ENCODE measurements at regions of chr2 and their contacts with region 1.

Region 1: DNA sequence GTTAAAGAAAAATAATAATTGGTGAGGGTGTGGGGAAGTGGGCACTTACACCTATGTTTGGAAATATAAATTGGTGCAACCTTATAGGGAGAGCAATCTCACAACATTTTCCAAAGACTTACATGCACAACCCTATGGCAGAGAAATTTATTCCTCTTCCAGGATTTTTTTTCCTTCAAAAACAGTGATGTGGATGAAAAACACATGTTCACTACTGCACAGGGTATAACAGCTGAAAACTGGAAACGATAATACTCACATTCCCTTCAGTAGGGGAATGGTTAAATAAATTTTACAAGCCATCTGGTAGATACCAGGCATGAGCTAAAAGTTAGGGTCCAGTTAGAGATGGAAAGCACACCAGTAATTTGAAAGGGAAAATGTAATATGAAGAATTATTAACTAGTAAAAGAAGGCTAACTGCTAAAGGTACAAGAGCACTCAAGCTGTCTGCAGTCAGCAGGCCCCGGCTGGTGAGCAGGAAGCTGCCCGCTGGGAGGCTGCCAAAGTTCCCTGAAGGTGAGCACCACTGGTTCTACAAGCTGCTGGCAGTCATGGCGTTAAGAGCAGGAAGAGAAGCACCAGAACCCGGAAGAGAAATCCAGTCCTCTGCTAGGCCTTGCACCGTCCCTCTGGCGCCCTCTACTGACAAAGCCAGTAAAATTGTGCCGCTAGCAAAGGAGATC is 28.4 kb upstream of the CASP8 start:
- DNase-seq: peak; percentile 98
- H3K4me3 Mint-ChIP-seq: peak overlapping the region; percentile 71
- H3K27ac Mint-ChIP-seq: peak overlapping the region; percentile 84
- H3K4me1 Mint-ChIP-seq: peaks cover 51% of the 10 kb centered on the region
- H3K27me3 Mint-ChIP-seq: no peaks in the 10 kb centered on the region

Region 2: DNA sequence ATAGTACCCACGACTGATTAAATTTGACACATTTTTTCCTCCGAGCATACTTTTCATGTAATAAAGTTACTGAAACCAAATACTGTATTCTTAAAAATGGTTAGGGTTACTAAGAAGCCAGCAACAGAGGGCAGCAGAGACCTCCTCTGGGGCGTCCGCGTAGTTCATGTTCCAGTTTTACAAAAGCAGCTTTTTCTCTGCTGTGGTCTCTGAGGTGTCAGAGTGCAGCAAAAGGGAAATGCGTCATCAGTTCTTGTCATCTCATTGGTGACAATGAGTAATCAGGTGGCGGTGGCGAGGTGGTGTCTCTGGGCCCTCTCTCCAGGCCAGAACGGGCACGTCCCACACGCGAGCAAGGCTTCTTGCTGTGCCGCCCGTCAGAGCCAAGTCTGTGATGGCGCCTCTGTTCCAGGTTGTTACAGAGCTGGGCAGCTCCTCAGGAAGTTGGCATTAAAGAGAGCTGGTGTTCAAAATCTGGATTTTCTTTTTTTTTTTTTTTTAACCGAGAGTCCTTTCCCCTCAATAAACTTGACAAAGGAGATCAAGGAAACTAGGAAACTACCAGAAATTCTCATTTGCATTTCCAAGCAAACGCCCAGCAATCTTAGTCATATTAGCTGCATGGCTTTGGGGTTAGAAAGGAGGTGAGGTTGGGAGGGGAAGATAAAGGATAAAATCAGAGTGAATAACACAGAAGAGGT is 518.8 kb before region 1 on chr2:
- CTCF ChIA-PET with region 1: interaction called, 3 read pairs
- intact Hi-C with region 1: loop called (anchors 1 kb)
- DNase-seq: peak; percentile 96
- H3K4me3 Mint-ChIP-seq: peak overlapping the region; percentile 77
- H3K27ac Mint-ChIP-seq: peak overlapping the region; percentile 100
- H3K4me1 Mint-ChIP-seq: peaks cover 32% of the 10 kb centered on the region
- H3K27me3 Mint-ChIP-seq: no peaks in the 10 kb centered on the region

Region 3: DNA sequence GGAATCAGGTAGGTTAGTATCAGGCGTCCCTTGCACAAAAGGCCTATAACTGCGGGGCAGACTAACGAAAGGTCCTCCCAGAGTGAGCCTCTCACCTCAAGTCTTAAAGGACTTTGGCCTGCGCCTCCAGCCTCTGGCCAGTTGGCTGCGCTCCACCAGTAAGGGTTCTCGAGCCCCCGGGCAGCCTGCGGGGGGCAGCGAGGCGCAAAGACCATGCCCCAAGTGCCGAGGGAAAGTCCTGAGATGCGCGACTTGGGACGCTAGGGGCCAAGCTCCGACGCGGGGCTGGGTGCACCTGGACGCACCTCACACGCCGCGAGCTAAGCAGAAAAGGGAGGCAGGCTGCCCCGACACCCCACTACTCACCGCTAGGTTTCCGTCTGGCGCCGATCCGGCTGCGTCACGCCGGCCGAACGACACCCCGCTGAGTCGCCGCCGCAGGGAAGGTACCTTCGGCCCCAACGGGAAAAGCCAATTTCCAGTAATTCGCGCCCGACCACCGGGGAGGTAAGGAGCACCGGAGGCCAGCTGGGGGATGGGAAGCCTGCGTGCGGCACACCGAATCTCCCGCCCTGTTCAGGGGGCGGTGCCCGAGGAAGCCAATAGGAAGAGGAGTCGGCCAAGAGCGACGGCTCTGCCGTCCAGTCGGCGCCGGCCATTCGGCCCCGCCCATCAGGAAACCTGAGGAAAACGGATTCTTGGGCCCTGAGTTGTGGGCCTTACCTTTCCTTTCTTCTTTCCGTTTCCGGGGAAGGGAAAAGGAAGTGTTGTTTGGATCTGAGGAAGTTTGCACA is 268.6 kb before region 1 on chr2 and contains the start of gene ORC2:
- CTCF ChIA-PET with region 1: interaction called, 4 read pairs
- intact Hi-C with region 1: loop called (anchors 1 kb)
- DNase-seq: peak; percentile 94
- H3K4me3 Mint-ChIP-seq: peak within 1 kb of the TSS; percentile 88
- H3K27ac Mint-ChIP-seq: peak within 1 kb of the TSS; percentile 94
- H3K4me1 Mint-ChIP-seq: peaks cover 56% of the 10 kb centered on the region
- H3K27me3 Mint-ChIP-seq: no peaks in the 10 kb centered on the region
- total RNA-seq, gene ORC2: 53.7 to 56.8 TPM

Region 4: GRCh38 chr2:201194097-201194496 is 37.8 kb before region 1 on chr2:
- CTCF ChIA-PET with region 1: interaction called, 60 read pairs
- intact Hi-C with region 1: loop called (anchors 1 kb)
- DNase-seq: no peak
- H3K4me3 Mint-ChIP-seq: no peak overlapping the region
- H3K27ac Mint-ChIP-seq: peak overlapping the region; percentile 50
- H3K4me1 Mint-ChIP-seq: peaks cover 66% of the 10 kb centered on the region
- H3K27me3 Mint-ChIP-seq: no peaks in the 10 kb centered on the region

Region 5: DNA sequence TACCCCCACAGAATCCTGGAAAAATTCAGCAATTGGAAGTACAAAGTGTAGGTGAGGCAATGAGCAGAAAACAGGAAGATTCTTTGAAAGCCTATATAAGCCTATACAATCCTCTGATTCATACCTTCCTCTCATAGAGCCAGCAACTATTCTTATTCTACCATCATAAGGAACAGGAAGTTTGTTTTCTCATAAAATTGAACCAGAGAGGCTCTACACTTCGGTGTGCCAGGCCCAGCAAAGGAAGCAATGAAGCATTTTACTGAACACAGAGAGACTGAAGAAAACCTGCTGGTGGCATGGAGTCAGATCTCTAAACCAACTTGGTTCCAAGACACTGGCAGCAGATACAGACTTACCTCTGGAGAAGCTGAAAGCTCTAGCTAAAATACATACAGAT is 47.2 kb after region 1 on chr2:
- CTCF ChIA-PET with region 1: interaction called, 5 read pairs
- intact Hi-C with region 1: loop called (anchors 1 kb)
- DNase-seq: peak; percentile 37
- H3K4me3 Mint-ChIP-seq: no peak overlapping the region
- H3K27ac Mint-ChIP-seq: peak overlapping the region; percentile 73
- H3K4me1 Mint-ChIP-seq: peaks cover 18% of the 10 kb centered on the region
- H3K27me3 Mint-ChIP-seq: no peaks in the 10 kb centered on the region

Region 6: GRCh38 chr2:201378496-201379397 is 146.8 kb after region 1 on chr2:
- CTCF ChIA-PET with region 1: no interaction called
- intact Hi-C with region 1: no loop called
- DNase-seq: no peak
- H3K4me3 Mint-ChIP-seq: no peak overlapping the region
- H3K27ac Mint-ChIP-seq: no peak overlapping the region
- H3K4me1 Mint-ChIP-seq: no peaks in the 10 kb centered on the region
- H3K27me3 Mint-ChIP-seq: no peaks in the 10 kb centered on the region

Region 7: GRCh38 chr2:201780674-201781581 is 549.0 kb after region 1 on chr2 and contains the start of gene ALS2:
- CTCF ChIA-PET with region 1: no interaction called
- intact Hi-C with region 1: loop called (anchors 2 kb)
- DNase-seq: peak; percentile 96
- H3K4me3 Mint-ChIP-seq: peak within 1 kb of the TSS; percentile 86
- H3K27ac Mint-ChIP-seq: peak within 1 kb of the TSS; percentile 83
- H3K4me1 Mint-ChIP-seq: peaks cover 13% of the 10 kb centered on the region
- H3K27me3 Mint-ChIP-seq: peaks cover 3% of the 10 kb centered on the region
- total RNA-seq, gene ALS2: 9.4 to 11.2 TPM